B cell (primary cell): ENCODE measurements at regions of chr16 and their contacts with region 1.

Region 1: DNA sequence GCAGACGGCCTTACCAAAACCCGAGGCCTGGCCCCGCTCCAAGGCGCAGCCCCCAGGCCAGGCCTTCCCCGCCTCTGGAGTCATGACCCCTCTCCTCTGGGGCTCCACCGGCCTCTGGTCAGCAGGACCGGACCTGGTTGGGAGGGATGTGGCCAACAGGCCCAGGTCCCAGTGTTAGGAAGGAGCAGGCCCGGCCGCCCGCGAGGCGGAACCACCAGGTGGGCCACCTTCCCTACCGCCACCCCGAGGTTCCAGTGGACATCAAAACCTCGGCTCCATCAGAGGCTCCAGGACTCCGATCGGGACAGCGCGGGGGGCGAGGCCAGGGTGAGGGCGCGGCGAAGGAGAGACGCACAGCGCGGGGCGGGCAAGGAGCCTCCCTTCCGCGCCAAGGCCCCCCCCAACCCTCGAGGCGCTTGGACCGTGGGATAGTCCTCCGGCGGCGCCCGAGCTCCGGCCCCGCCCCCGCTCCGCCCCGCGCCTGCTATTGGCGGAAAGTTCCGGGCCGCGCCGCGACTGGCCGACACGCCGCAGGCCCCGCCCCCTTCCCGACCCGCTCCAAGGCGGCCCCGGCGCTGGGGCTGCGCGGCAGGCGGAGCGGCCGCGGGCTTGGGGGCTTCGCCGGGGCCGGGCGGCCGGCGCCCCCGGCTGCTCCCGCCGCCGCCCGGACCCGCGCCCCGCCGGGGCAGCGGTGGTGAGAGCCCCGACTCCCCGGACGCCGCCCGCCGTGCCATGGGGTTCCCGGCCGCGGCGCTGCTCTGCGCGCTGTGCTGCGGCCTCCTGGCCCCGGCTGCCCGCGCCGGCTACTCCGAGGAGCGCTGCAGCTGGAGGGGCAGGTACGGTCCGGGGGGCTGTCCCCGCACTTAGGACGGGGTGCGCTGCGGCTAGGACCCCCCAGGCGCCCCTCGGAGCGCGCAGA is at the start of gene METRN:
- DNase-seq: peak; percentile 88
- ATAC-seq: peak; percentile 91
- H3K4me3 ChIP-seq: peak within 1 kb of the TSS in 4 of 5 experiments; percentile 8 to 61 (median 54)
- H3K4me3 Mint-ChIP-seq: peak within 1 kb of the TSS; percentile 72
- H3K27ac ChIP-seq: no peak within 1 kb of the TSS
- H3K27ac Mint-ChIP-seq: no peak within 1 kb of the TSS
- H3K4me1 ChIP-seq: peaks cover 15 to 25% of the 10 kb centered on the region in 2 donors
- H3K4me1 Mint-ChIP-seq: peaks cover 8% of the 10 kb centered on the region
- H3K27me3 ChIP-seq: peaks cover 0 to 44% (median 17%) of the 10 kb centered on the region in 4 experiments
- H3K27me3 Mint-ChIP-seq: peaks cover 10% of the 10 kb centered on the region
- CTCF ChIP-seq: no peak
- total RNA-seq, gene METRN: 6.7 and 10.4 TPM in 2 replicates

Region 2: DNA sequence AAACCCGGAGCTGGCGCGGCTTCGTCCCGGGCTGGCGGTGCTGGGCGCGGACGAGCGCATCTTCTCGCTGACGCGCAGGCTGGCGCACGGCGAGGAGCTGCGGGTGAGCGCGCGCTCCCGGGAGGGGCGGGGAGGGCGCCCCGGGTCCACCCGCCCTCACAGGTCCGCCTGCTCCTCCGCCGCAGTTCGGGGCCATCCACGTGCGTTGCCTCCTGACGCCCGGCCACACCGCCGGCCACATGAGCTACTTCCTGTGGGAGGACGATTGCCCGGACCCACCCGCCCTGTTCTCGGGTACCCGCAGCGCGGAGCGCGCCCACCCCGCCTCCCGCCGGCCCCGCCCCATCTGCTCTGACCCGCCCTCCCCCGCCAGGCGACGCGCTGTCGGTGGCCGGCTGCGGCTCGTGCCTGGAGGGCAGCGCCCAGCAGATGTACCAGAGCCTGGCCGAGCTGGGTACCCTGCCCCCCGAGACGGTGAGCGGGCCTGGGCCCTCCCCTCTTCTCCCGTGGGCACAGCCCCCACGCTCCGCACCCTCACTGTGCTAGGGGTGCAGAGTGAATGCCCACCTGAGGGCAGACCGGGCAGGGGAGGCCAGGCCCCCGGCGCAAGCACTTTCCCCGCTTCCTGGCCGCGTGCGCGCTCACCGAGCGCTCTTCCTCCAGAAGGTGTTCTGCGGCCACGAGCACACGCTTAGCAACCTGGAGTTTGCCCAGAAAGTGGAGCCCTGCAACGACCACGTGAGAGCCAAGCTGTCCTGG is 13.5 kb after region 1 on chr16:
- CTCF ChIA-PET with region 1: interaction called, 21 read pairs
- POLR2A ChIA-PET with region 1: interaction called, 11 read pairs
- intact Hi-C with region 1: no loop called
- DNase-seq: peak; percentile 88
- ATAC-seq: peak; percentile 52
- H3K4me3 ChIP-seq: peak overlapping the region in 4 of 5 experiments; percentile 69 to 81 (median 74)
- H3K4me3 Mint-ChIP-seq: peak overlapping the region; percentile 73
- H3K27ac ChIP-seq: no peak overlapping the region
- H3K27ac Mint-ChIP-seq: peak overlapping the region; percentile 26
- H3K4me1 ChIP-seq: peaks cover 10 to 28% of the 10 kb centered on the region in 2 donors
- H3K4me1 Mint-ChIP-seq: peaks cover 16% of the 10 kb centered on the region
- H3K27me3 ChIP-seq: no peaks in the 10 kb centered on the region
- H3K27me3 Mint-ChIP-seq: no peaks in the 10 kb centered on the region
- CTCF ChIP-seq: no peak

Region 3: GRCh38 chr16:733382-734207 is 18.8 kb after region 1 on chr16:
- CTCF ChIA-PET with region 1: interaction called, 21 read pairs
- POLR2A ChIA-PET with region 1: interaction called, 11 read pairs
- intact Hi-C with region 1: no loop called
- DNase-seq: peak; percentile 48
- ATAC-seq: peak; percentile 29
- H3K4me3 ChIP-seq: no peak overlapping the region
- H3K4me3 Mint-ChIP-seq: no peak overlapping the region
- H3K27ac ChIP-seq: no peak overlapping the region
- H3K27ac Mint-ChIP-seq: no peak overlapping the region
- H3K4me1 ChIP-seq: peaks cover 10 to 17% of the 10 kb centered on the region in 2 donors
- H3K4me1 Mint-ChIP-seq: peaks cover 9% of the 10 kb centered on the region
- H3K27me3 ChIP-seq: no peaks in the 10 kb centered on the region
- H3K27me3 Mint-ChIP-seq: no peaks in the 10 kb centered on the region
- CTCF ChIP-seq: peak; percentile 55

Region 4: GRCh38 chr16:740764-741505 is 26.1 kb after region 1 on chr16 and contains the start of gene CIAO3:
- CTCF ChIA-PET with region 1: interaction called, 31 read pairs
- POLR2A ChIA-PET with region 1: interaction called, 9 read pairs
- intact Hi-C with region 1: loop called (anchors 1 kb)
- DNase-seq: peak; percentile 95
- ATAC-seq: peak; percentile 88
- H3K4me3 ChIP-seq: peak within 1 kb of the TSS; percentile 21 to 94 (median 81)
- H3K4me3 Mint-ChIP-seq: peak within 1 kb of the TSS; percentile 82
- H3K27ac ChIP-seq: peak within 1 kb of the TSS; percentile 86 to 94
- H3K27ac Mint-ChIP-seq: peak within 1 kb of the TSS; percentile 83
- H3K4me1 ChIP-seq: peaks cover 20 to 36% of the 10 kb centered on the region in 2 donors
- H3K4me1 Mint-ChIP-seq: peaks cover 18% of the 10 kb centered on the region
- H3K27me3 ChIP-seq: no peaks in the 10 kb centered on the region
- H3K27me3 Mint-ChIP-seq: no peaks in the 10 kb centered on the region
- CTCF ChIP-seq: peak; percentile 97
- total RNA-seq, gene CIAO3: 59.4 and 67.6 TPM in 2 replicates

Region 5: GRCh38 chr16:788394-789126 is 73.7 kb after region 1 on chr16 and contains the start of gene CHTF18:
- CTCF ChIA-PET with region 1: interaction called, 94 read pairs
- POLR2A ChIA-PET with region 1: no interaction called
- intact Hi-C with region 1: loop called (anchors 1 kb)
- DNase-seq: peak; percentile 94
- ATAC-seq: peak; percentile 97
- H3K4me3 ChIP-seq: peak within 1 kb of the TSS; percentile 15 to 86 (median 81)
- H3K4me3 Mint-ChIP-seq: peak within 1 kb of the TSS; percentile 86
- H3K27ac ChIP-seq: peak within 1 kb of the TSS in 1 of 2 donors; percentile 68
- H3K27ac Mint-ChIP-seq: peak within 1 kb of the TSS; percentile 76
- H3K4me1 ChIP-seq: peaks cover 13 to 24% of the 10 kb centered on the region in 2 donors
- H3K4me1 Mint-ChIP-seq: peaks cover 7% of the 10 kb centered on the region
- H3K27me3 ChIP-seq: no peaks in the 10 kb centered on the region
- H3K27me3 Mint-ChIP-seq: no peaks in the 10 kb centered on the region
- CTCF ChIP-seq: no peak
- total RNA-seq, gene CHTF18: 76.1 and 77.9 TPM in 2 replicates

Region 6: GRCh38 chr16:970766-971581 is 256.2 kb after region 1 on chr16 and contains the start of gene LMF1:
- CTCF ChIA-PET with region 1: no interaction called
- POLR2A ChIA-PET with region 1: no interaction called
- intact Hi-C with region 1: loop called (anchors 5 kb)
- DNase-seq: peak; percentile 96
- ATAC-seq: peak; percentile 99
- H3K4me3 ChIP-seq: peak within 1 kb of the TSS in 4 of 5 experiments; percentile 68 to 90 (median 84)
- H3K4me3 Mint-ChIP-seq: peak within 1 kb of the TSS; percentile 83
- H3K27ac ChIP-seq: peak within 1 kb of the TSS; percentile 38 to 77
- H3K27ac Mint-ChIP-seq: peak within 1 kb of the TSS; percentile 53
- H3K4me1 ChIP-seq: peaks cover 9 to 17% of the 10 kb centered on the region in 2 donors
- H3K4me1 Mint-ChIP-seq: peaks cover 19% of the 10 kb centered on the region
- H3K27me3 ChIP-seq: peaks cover 0 to 4% (median 0%) of the 10 kb centered on the region in 4 experiments
- H3K27me3 Mint-ChIP-seq: no peaks in the 10 kb centered on the region
- CTCF ChIP-seq: no peak
- total RNA-seq, gene LMF1: 60.3 and 63.2 TPM in 2 replicates

Region 7: GRCh38 chr16:1102921-1103635 is 388.3 kb after region 1 on chr16:
- CTCF ChIA-PET with region 1: interaction called, 7 read pairs
- POLR2A ChIA-PET with region 1: interaction called, 3 read pairs
- intact Hi-C with region 1: loop called (anchors 2 kb)
- DNase-seq: peak; percentile 76
- ATAC-seq: peak; percentile 85
- H3K4me3 ChIP-seq: peak overlapping the region in 2 of 5 experiments; percentile 15 to 19
- H3K4me3 Mint-ChIP-seq: no peak overlapping the region
- H3K27ac ChIP-seq: no peak overlapping the region
- H3K27ac Mint-ChIP-seq: no peak overlapping the region
- H3K4me1 ChIP-seq: peaks cover 8 to 10% of the 10 kb centered on the region in 2 donors
- H3K4me1 Mint-ChIP-seq: no peaks in the 10 kb centered on the region
- H3K27me3 ChIP-seq: peaks cover 0 to 36% (median 5%) of the 10 kb centered on the region in 4 experiments
- H3K27me3 Mint-ChIP-seq: peaks cover 4% of the 10 kb centered on the region
- CTCF ChIP-seq: peak; percentile 69